ENCODE measurements at regions of chr1 and their contacts with region 1.

Region 1: GRCh38 chr1:44730741-44731512 is at the start of gene RNU5D-1:
- DNase-seq: peak; percentile 99
- H3K4me3 Mint-ChIP-seq: peak within 1 kb of the TSS; percentile 57
- H3K27ac Mint-ChIP-seq: peak within 1 kb of the TSS; percentile 99
- H3K4me1 Mint-ChIP-seq: peaks cover 46% of the 10 kb centered on the region
- H3K27me3 Mint-ChIP-seq: peaks cover 3% of the 10 kb centered on the region
- total RNA-seq, gene RNU5D-1: not detected

Region 2: DNA sequence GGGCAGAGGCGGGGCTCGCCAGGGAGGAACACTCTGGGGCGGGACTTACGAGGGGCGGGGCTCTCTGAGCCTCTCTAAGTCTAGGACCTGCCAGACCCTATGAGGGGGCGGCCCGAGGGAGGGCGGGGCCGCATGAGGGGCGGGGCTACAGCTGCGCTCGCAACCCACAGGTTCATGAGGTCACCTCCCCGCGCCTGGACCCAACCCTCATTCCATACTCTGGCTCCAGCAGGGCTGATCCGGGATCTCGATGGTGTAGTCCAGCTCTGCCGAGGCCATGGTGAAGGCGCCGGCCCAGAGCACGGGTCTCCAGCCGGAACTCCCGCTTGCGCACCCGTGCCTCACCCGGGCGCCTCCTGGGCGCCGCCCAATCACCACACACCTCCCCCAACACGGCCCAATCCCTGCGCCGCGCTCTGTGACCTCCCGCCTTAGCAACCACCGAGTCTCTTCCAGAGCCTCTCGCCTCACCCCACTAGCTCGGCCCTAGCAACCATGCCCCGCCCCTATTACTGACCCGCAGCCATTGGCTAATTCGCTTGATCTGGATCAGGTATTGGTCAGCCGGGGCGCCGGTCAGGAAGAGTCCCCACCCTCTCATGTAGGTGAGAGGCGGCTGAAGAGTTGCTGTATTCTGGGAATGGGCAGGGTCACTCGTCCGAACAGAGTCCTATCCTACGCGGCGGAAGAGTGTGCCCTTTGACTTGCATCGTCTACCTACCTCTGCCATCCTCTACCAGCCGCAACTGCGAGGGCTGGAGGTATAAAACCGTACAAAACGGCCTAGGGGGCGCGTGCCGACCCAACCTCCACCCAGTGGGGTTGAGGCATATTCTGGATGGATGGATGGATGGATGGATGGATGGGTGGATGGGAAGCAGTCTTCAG is 56.6 kb before region 1 on chr1 and contains the starts of genes ARMH1 and TMEM53:
- CTCF ChIA-PET with region 1: no interaction called
- intact Hi-C with region 1: loop called (anchors 2 kb)
- DNase-seq: peak; percentile 99
- H3K4me3 Mint-ChIP-seq: peak within 1 kb of the TSS; percentile 82
- H3K27ac Mint-ChIP-seq: peak within 1 kb of the TSS; percentile 78
- H3K4me1 Mint-ChIP-seq: peaks cover 18% of the 10 kb centered on the region
- H3K27me3 Mint-ChIP-seq: no peaks in the 10 kb centered on the region
- total RNA-seq, gene ARMH1: 143 to 155 TPM
- total RNA-seq, gene TMEM53: 4.5 to 4.9 TPM

Region 3: DNA sequence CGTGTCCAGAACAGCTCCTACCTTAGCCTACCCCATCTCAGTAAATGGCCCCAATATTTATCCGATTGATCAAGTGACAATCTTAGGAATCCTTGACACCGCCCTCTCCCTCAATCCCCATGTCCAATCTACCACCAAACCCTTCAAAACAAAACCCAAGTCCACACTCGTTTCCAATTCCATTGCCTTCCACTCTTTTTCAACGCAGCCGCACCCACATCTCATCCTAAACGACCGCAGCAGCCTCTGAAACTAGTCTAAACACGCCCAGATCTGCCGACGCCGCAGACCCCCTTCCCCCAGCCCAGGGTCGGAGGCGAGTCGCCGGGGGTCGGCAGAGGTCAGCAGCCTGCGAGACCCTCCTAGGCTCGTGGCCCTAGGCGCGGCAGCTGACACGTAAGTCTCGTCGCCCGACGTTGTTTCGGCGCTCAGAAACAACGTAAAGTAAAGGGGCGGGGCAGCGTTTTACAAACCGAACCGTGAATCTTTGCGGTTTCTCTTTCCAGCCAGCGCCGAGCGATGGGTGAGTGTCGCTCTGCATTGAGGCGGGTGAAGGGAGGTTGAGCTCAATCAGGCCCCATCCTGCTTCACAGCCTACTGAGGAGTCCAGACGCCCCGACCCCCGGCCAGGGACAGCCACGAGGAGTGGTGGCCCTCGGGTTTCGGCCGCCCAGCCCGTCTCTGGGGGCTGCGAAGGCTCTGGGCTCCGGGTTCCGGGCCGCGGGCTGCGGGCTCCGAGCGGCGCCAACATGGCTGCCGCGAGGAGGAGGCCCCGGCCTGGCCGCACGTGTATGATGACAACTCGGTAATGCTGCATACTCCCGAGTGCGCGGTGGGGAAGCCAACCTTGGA is 44.4 kb after region 1 on chr1 and contains the start of gene RPS8:
- CTCF ChIA-PET with region 1: interaction called, 21 read pairs
- intact Hi-C with region 1: loop called (anchors 1 kb)
- DNase-seq: peak; percentile 94
- H3K4me3 Mint-ChIP-seq: peak within 1 kb of the TSS; percentile 95
- H3K27ac Mint-ChIP-seq: peak within 1 kb of the TSS; percentile 92
- H3K4me1 Mint-ChIP-seq: peaks cover 32% of the 10 kb centered on the region
- H3K27me3 Mint-ChIP-seq: no peaks in the 10 kb centered on the region
- total RNA-seq, gene RPS8: 3,619 to 3,772 TPM

Region 4: DNA sequence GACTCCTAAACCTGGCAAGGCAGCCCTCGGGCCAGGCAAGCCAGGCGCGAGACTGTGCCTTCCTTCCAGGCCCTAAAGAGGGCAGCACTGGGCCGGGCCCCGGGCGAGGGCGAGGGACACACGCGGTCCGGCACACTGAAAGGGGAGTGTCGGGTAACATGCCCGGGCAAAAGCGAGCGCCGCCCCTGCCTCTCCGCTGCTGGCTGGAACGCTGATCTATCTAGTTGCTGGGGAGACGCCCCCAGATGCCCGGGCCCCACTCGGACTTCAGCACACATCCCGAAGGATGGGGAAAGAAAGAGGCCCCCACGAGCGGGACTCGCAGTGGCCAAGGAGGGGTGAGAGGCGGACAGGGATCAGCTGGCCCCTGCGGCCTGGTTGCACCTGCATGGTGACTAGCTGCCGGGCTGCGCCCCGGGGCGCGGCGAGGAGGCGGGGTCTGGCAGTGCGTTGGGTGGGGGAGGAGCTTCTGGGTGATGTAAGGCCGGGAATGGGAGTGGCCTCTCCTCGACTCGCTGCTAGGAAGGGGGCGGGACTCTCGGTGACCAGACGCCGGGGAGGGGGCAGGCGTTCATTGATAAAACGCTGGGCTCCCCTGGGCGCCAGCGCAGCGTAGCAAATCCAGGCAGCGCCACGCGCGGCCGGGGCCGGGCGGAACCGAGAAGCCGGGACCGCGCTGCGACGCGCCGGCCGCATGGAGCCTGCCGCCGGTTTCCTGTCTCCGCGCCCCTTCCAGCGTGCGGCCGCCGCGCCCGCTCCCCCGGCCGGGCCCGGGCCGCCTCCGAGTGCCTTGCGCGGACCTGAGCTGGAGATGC is 69.0 kb after region 1 on chr1 and contains the start of gene PLK3:
- CTCF ChIA-PET with region 1: interaction called, 4 read pairs
- intact Hi-C with region 1: loop called (anchors 2 kb)
- DNase-seq: peak; percentile 99
- H3K4me3 Mint-ChIP-seq: peak within 1 kb of the TSS; percentile 81
- H3K27ac Mint-ChIP-seq: peak within 1 kb of the TSS; percentile 100
- H3K4me1 Mint-ChIP-seq: peaks cover 36% of the 10 kb centered on the region
- H3K27me3 Mint-ChIP-seq: no peaks in the 10 kb centered on the region
- total RNA-seq, gene PLK3: 44.2 to 46.7 TPM

Region 5: DNA sequence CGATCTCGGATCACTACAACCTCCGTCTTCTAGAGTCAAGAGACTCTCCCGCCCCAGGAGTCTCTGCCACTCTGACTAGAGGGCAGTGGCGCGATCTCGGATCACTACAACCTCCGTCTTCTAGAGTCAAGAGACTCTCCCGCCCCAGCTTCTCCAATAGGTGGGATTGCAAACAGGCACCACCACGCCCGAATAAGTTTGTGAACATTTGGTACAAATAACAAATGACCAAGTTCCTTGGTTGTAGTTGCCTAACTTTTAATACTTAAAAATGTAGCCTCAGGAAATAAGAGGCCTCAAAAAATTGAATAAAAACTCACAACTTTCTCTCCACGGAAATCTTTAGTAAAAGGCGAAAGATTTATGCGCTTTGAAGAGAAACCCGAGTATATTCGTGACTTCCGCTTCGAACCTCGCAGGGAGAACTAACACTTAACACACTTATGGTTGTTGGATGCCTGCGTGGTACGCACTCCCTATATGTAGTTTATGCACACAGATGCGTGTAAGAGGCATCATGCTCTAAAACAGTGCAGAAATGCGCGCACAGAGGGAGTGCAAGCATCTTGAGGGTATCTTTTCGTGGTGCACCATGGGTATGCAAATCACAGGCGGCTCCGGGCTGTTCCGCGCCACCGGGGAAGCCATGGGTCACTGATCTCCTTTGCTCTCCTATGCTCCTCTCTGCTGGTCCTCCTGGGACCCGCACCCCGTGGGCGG is 88.8 kb after region 1 on chr1:
- CTCF ChIA-PET with region 1: interaction called, 11 read pairs
- intact Hi-C with region 1: loop called (anchors 1 kb)
- DNase-seq: peak; percentile 86
- H3K4me3 Mint-ChIP-seq: peak overlapping the region; percentile 88
- H3K27ac Mint-ChIP-seq: peak overlapping the region; percentile 99
- H3K4me1 Mint-ChIP-seq: peaks cover 34% of the 10 kb centered on the region
- H3K27me3 Mint-ChIP-seq: no peaks in the 10 kb centered on the region

Region 6: DNA sequence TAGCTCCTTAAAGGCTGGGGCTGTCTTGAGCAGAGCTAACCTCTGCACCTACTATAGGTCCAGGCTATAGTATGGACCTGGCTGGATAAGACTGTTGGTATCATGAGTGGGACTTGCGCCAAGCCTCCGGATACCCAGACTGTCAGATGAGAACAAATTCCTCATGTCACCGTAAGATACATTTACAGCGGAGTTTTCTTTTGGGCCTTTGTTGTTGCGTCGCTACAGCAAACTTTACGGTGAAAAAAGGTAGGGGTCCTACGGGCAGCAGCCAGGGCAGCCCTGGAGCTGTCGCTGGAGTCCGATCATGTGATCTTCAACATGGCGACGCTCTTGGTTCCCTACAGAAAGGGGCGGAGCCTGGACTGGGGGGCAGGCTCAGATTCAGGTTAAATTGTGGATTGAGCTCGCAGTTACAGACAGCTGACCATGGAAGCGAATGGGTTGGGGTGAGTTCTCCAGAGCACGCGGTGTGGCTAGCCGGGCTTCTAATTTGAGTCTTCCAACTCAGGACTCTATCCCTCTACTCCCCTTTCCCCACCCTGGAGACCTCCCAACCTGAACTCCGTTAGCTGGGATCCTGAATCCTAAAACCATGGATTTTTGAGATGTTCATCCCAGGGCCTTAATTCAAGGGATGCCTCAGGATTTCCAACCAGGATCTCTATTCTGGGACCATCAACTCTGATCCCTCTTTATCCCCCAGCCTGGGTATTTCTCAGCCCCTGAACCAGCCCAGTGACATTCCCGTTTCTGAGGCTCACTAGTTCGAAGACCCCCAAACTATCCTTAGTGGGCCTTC is 281.1 kb after region 1 on chr1 and contains the start of gene UROD:
- CTCF ChIA-PET with region 1: interaction called, 10 read pairs
- intact Hi-C with region 1: loop called (anchors 1 kb)
- DNase-seq: peak; percentile 96
- H3K4me3 Mint-ChIP-seq: peak within 1 kb of the TSS; percentile 81
- H3K27ac Mint-ChIP-seq: peak within 1 kb of the TSS; percentile 89
- H3K4me1 Mint-ChIP-seq: peaks cover 36% of the 10 kb centered on the region
- H3K27me3 Mint-ChIP-seq: no peaks in the 10 kb centered on the region
- total RNA-seq, gene UROD: 117 to 126 TPM

Region 7: GRCh38 chr1:45148209-45148825 is 417.4 kb after region 1 on chr1:
- CTCF ChIA-PET with region 1: no interaction called
- intact Hi-C with region 1: no loop called
- DNase-seq: no peak
- H3K4me3 Mint-ChIP-seq: no peak overlapping the region
- H3K27ac Mint-ChIP-seq: no peak overlapping the region
- H3K4me1 Mint-ChIP-seq: peaks cover 12% of the 10 kb centered on the region
- H3K27me3 Mint-ChIP-seq: no peaks in the 10 kb centered on the region